Vagina (tissue), 2 donors: ENCODE measurements at regions of chr6 and their contacts with region 1.

Region 1: DNA sequence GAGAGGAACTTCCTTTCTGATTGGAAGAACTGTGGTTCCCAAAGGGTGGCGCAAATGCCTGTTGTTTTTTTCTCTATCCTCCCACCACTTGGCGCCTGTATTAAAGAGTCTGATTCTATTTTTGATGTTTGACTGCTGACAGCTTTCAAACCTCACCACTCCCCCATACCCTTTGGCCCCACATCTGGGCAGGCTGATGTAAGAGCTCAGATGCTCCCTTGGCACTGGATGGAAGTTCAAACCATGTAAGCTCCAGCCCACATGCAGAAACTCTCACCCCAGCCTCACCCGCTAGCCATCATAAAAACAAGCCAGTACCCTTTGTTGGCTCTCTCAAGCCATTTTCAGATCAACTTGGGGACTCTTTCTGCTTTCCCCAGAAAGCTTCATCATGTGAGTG is 20.0 kb upstream of the TMEM14A start:
- DNase-seq: no peak
- H3K4me3 ChIP-seq: no peak overlapping the region
- H3K27ac ChIP-seq: no peak overlapping the region
- H3K4me1 ChIP-seq: peaks cover 12% of the 10 kb centered on the region
- H3K27me3 ChIP-seq: no peaks in the 10 kb centered on the region
- CTCF ChIP-seq: no peak
- POLR2A ChIP-seq: no peak

Region 2: DNA sequence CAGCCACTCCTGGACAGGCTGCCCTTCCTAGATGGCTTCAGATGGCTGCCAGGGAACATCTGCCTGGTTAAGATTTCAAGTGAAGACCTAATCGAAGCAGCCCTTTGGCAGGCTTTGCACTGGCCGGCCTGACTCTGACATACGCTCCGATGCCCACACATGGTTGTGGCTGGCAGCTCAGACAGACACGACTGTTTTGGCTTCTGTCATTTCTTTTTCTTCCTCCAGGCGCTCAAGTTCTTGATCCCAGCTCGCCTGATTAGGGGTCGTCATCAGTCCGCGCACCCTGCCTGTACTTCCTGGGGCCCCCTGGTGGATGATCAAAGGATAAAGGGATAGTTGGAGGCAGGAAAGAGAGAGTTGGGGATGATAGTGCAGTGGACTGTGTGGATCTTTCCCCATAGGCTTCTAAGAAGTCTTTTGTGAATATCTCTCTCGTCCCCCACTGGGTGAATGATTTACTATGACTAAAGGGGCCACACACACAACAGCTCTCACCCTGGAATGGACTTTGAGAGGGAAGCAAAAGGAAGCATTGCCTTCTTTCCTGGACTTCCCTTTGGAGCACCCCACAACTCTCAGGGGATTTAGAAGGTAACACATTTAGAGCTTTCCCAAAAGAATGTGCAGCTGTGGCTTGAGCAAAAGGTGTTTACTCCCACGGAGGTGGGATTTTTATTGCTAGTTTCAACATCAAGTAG is 52.7 kb before region 1 on chr6:
- intact Hi-C with region 1: loop called (anchors 10 kb)
- DNase-seq: peak in 1 of 2 donors; percentile 46
- H3K4me3 ChIP-seq: no peak overlapping the region
- H3K27ac ChIP-seq: peak overlapping the region; percentile 12
- H3K4me1 ChIP-seq: peaks cover 31% of the 10 kb centered on the region
- H3K27me3 ChIP-seq: no peaks in the 10 kb centered on the region
- CTCF ChIP-seq: peak; percentile 33 to 59 (median 58)
- POLR2A ChIP-seq: no peak